Tibial artery (tissue), 4 donors: ENCODE measurements at regions of chr7 and their contacts with region 1.

Region 1: DNA sequence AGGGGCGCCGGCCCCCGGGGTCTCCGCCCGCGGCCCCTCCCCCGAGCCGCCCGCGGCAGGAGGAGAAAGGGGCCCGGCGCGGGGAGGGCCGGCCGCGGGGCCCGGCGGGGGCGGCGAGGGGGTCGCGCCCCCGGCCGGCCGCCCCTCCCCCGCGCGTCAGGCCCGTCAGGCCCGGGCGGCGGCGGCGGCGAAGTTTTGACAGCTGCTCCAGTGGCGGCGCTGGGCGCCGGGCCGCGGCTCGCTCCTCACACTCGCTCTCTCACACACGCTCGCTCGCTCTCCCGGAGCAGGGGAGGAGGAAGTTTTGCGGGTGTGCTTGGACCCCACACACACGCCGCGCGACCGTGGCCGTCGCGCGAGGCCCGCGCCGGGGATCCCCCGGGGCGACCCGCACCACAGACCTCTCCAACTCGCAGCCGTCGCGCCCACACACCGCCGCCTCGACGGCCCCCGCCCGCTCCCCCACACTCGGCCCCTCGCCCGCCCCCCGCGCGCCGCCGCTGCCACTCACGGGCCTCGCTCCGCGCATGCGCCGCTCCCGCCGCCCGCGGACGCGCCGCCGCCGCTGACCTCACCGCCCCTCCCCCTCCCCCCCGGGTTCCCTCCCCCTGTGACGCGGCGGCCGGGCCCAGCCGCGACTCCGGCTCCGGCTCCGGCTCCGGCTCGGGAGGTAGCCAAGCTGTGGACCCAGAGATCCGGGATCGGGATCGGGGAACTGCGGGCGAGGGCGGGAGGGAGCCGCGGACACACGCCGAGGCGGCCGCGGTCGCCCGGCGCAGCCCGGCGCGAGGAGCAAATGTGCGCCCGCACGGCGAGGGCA is 518 bp upstream of the KMT2C start:
- DNase-seq: peak; percentile 91 to 97
- H3K4me3 ChIP-seq: peak overlapping the region; percentile 97 to 98
- H3K27ac ChIP-seq: peak overlapping the region; percentile 94 to 97
- H3K4me1 ChIP-seq: peaks cover 0 to 34% (median 8%) of the 10 kb centered on the region in 4 donors
- H3K27me3 ChIP-seq: no peaks in the 10 kb centered on the region
- CTCF ChIP-seq: no peak

Region 2: DNA sequence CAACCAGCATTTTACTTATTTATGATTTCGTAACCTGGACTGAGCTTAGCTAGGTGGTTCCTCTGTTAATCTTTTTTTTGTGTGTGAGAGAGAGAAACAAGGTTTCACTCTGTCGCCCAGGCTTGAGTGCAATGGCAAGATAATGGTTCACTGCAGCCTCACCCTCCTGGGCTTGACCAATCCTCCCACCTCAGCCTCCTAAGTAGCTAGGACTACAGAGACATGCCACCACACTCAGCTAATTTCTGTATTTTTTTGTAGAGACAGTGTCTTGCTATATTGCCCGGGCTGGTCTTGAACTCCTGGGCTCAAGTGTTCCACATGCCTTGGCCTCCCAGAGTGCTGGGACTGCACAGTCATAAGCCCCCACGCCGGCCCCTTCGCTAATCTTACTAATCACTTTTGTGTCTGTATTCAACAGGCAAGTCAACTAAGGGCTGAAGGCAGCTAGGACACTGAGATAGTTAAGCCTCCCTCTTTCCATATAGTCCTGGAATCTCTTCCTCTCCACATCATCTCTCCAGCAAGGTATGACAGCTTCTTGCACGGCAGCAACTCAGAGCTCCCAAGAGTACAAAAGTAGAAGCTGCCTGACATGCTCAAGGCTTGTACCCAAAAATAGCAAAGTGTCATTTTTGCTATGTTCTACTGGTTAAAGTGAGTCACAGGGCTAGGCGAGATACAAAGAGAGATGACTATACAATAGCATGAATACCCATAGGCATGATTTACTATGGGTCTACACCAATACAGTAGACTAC is 11.8 kb before region 1 on chr7:
- intact Hi-C with region 1: no loop called
- DNase-seq: no peak
- H3K4me3 ChIP-seq: no peak overlapping the region
- H3K27ac ChIP-seq: no peak overlapping the region
- H3K4me1 ChIP-seq: peaks cover 0 to 58% (median 27%) of the 10 kb centered on the region in 4 donors
- H3K27me3 ChIP-seq: no peaks in the 10 kb centered on the region
- CTCF ChIP-seq: no peak

Region 3: GRCh38 chr7:152463709-152464311 is 27.5 kb after region 1 on chr7:
- intact Hi-C with region 1: loop called (anchors 2 kb)
- DNase-seq: peak; percentile 100
- H3K4me3 ChIP-seq: peak overlapping the region; percentile 95 to 100
- H3K27ac ChIP-seq: peak overlapping the region; percentile 99 to 100
- H3K4me1 ChIP-seq: peaks cover 0 to 13% (median 11%) of the 10 kb centered on the region in 4 donors
- H3K27me3 ChIP-seq: no peaks in the 10 kb centered on the region
- CTCF ChIP-seq: peak in 1 of 2 experiments; percentile 7

Region 4: GRCh38 chr7:152489044-152489443 is 52.7 kb after region 1 on chr7:
- intact Hi-C with region 1: no loop called
- DNase-seq: no peak
- H3K4me3 ChIP-seq: no peak overlapping the region
- H3K27ac ChIP-seq: no peak overlapping the region
- H3K4me1 ChIP-seq: no peaks in the 10 kb centered on the region
- H3K27me3 ChIP-seq: peaks cover 0 to 7% of the 10 kb centered on the region in 2 donors
- CTCF ChIP-seq: no peak